B cell (primary cell): ENCODE measurements at regions of chrX and their contacts with region 1.

Region 1: DNA sequence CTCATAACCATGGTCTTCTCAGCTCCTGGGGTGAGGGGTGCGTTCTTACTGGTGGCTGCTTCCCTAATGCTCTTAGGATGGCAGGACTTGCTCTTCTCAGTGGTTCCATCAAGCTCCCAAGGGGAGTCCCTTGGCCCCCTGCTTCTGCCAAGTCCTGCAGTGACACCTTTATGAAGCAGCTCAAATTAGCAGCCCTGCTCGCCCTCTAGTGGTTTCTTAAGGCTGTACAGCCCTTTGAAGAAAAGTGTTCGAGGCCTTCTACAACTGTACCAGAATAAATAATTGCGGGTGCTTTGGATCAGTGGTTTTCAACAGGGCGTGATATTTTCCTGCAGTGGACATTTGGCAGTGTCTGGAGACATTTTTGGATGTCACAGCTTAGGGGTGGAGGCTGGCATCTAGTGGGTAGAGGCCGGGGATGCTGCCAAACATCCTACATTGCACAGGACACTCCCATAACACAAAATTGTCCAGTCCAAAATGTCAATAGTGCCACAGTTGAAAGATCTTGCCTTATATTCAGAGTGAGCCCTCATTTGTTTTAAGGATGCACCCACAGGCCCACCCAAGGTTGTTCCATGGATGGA is 204.7 kb upstream of the S100G start:
- DNase-seq: peak; percentile 51
- ATAC-seq: peak; percentile 36
- H3K4me3 ChIP-seq: no peak overlapping the region
- H3K4me3 Mint-ChIP-seq: no peak overlapping the region
- H3K27ac ChIP-seq: no peak overlapping the region
- H3K27ac Mint-ChIP-seq: no peak overlapping the region
- H3K4me1 ChIP-seq: no peaks in the 10 kb centered on the region
- H3K4me1 Mint-ChIP-seq: no peaks in the 10 kb centered on the region
- H3K27me3 ChIP-seq: no peaks in the 10 kb centered on the region
- H3K27me3 Mint-ChIP-seq: no peaks in the 10 kb centered on the region
- CTCF ChIP-seq: peak; percentile 72

Region 2: GRCh38 chrX:15349046-15349445 is 1096.2 kb before region 1 on chrX:
- CTCF ChIA-PET with region 1: no interaction called
- POLR2A ChIA-PET with region 1: no interaction called
- intact Hi-C with region 1: loop called (anchors 2 kb)
- DNase-seq: peak; percentile 48
- ATAC-seq: peak; percentile 31
- H3K4me3 ChIP-seq: no peak overlapping the region
- H3K4me3 Mint-ChIP-seq: no peak overlapping the region
- H3K27ac ChIP-seq: no peak overlapping the region
- H3K27ac Mint-ChIP-seq: no peak overlapping the region
- H3K4me1 ChIP-seq: no peaks in the 10 kb centered on the region
- H3K4me1 Mint-ChIP-seq: no peaks in the 10 kb centered on the region
- H3K27me3 ChIP-seq: peaks cover 0 to 4% (median 0%) of the 10 kb centered on the region in 4 experiments
- H3K27me3 Mint-ChIP-seq: peaks cover 1% of the 10 kb centered on the region
- CTCF ChIP-seq: peak; percentile 49

Region 3: GRCh38 chrX:15493118-15493962 is 951.9 kb before region 1 on chrX and contains the start of gene PIR:
- CTCF ChIA-PET with region 1: interaction called, 3 read pairs
- POLR2A ChIA-PET with region 1: no interaction called
- intact Hi-C with region 1: loop called (anchors 2 kb)
- DNase-seq: peak; percentile 26
- ATAC-seq: peak; percentile 73
- H3K4me3 ChIP-seq: peak within 1 kb of the TSS in 4 of 5 experiments; percentile 20 to 46 (median 32)
- H3K4me3 Mint-ChIP-seq: peak within 1 kb of the TSS; percentile 86
- H3K27ac ChIP-seq: no peak within 1 kb of the TSS
- H3K27ac Mint-ChIP-seq: no peak within 1 kb of the TSS
- H3K4me1 ChIP-seq: peaks cover 7 to 8% of the 10 kb centered on the region in 2 donors
- H3K4me1 Mint-ChIP-seq: peaks cover 8% of the 10 kb centered on the region
- H3K27me3 ChIP-seq: peaks cover 0 to 10% (median 6%) of the 10 kb centered on the region in 4 experiments
- H3K27me3 Mint-ChIP-seq: peaks cover 15% of the 10 kb centered on the region
- CTCF ChIP-seq: no peak
- total RNA-seq, gene PIR: 0.22 and 0.24 TPM in 2 replicates

Region 4: DNA sequence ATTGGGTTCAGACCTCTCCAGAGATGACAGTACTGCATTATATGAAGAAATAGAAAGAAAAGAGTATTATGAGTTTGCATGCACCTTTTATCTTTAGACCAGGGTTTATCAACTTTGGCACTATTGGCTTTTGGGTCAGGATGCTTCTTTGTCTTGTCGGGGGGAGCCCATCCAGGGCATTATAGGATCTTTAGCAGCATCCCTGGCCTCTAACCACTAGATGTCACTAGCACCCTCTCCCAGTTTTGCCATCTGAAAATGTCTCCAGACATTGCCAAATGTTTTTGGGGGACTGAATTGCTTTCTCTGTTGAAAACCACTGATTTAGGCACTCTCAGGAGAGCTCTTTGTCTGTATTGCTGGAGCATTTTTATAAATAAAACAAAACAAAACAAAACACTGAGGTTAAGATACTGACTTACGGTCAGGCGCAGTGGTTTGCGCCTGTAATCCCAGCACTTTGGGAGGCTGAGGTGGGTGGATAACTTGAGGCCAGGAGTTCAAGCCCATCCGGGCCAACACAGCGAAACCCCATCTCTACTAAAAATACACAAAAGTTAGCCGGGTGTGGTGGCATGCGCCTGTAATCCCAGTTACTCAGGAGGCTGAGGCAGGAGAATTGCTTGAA is 683.6 kb before region 1 on chrX:
- CTCF ChIA-PET with region 1: no interaction called
- POLR2A ChIA-PET with region 1: no interaction called
- intact Hi-C with region 1: loop called (anchors 2 kb)
- DNase-seq: peak; percentile 47
- ATAC-seq: peak; percentile 43
- H3K4me3 ChIP-seq: no peak overlapping the region
- H3K4me3 Mint-ChIP-seq: no peak overlapping the region
- H3K27ac ChIP-seq: no peak overlapping the region
- H3K27ac Mint-ChIP-seq: peak overlapping the region; percentile 11
- H3K4me1 ChIP-seq: peaks cover 0 to 3% of the 10 kb centered on the region in 2 donors
- H3K4me1 Mint-ChIP-seq: peaks cover 9% of the 10 kb centered on the region
- H3K27me3 ChIP-seq: no peaks in the 10 kb centered on the region
- H3K27me3 Mint-ChIP-seq: no peaks in the 10 kb centered on the region
- CTCF ChIP-seq: peak; percentile 62

Region 5: GRCh38 chrX:16552546-16552945 is 107.3 kb after region 1 on chrX:
- CTCF ChIA-PET with region 1: no interaction called
- POLR2A ChIA-PET with region 1: no interaction called
- intact Hi-C with region 1: no loop called
- DNase-seq: no peak
- ATAC-seq: no peak
- H3K4me3 ChIP-seq: no peak overlapping the region
- H3K4me3 Mint-ChIP-seq: no peak overlapping the region
- H3K27ac ChIP-seq: no peak overlapping the region
- H3K27ac Mint-ChIP-seq: no peak overlapping the region
- H3K4me1 ChIP-seq: no peaks in the 10 kb centered on the region
- H3K4me1 Mint-ChIP-seq: no peaks in the 10 kb centered on the region
- H3K27me3 ChIP-seq: no peaks in the 10 kb centered on the region
- H3K27me3 Mint-ChIP-seq: no peaks in the 10 kb centered on the region
- CTCF ChIP-seq: no peak